Activated CD4-positive, alpha-beta memory T cell treated with anti-CD3 and anti-CD28 coated beads, Interleukin-2, amount 10 ng/mL, durations not matched to agents 7 days and 5 days (primary cell): ENCODE measurements at regions of chr1 and their contacts with region 1.

Region 1: DNA sequence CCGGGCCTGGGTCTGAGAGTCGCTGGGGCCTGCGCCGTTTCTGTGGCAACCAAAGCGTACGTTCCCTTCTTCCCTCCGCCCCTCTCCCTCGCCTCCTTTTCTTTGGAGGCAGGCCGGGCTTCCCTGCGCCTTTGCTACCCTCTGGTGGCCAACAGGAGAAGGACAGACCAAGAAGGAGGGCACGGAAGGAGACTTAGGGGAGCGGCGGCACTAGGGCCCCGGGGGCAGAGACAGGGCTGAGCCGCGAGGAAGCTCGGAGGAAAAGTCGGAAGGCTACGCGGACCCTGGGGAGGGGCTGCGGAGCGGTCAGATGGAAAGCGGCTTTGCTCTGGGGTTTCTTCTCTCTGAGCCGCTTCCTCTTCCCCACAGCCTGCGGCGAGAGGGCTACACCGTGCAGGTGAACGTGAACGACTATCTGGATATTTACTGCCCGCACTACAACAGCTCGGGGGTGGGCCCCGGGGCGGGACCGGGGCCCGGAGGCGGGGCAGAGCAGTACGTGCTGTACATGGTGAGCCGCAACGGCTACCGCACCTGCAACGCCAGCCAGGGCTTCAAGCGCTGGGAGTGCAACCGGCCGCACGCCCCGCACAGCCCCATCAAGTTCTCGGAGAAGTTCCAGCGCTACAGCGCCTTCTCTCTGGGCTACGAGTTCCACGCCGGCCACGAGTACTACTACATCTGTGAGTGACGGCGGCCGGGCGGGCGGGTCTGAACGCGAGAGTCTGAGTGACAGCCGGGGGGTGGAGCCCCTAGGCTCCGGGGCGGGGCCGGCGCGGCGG is 6.3 kb downstream of the EFNA3 start:
- DNase-seq: peak; percentile 93
- H3K4me3 Mint-ChIP-seq: peak overlapping the region; percentile 90
- H3K27ac Mint-ChIP-seq: peak overlapping the region; percentile 82
- H3K4me1 Mint-ChIP-seq: peaks cover 44% of the 10 kb centered on the region
- H3K27me3 Mint-ChIP-seq: peaks cover 35% of the 10 kb centered on the region

Region 2: DNA sequence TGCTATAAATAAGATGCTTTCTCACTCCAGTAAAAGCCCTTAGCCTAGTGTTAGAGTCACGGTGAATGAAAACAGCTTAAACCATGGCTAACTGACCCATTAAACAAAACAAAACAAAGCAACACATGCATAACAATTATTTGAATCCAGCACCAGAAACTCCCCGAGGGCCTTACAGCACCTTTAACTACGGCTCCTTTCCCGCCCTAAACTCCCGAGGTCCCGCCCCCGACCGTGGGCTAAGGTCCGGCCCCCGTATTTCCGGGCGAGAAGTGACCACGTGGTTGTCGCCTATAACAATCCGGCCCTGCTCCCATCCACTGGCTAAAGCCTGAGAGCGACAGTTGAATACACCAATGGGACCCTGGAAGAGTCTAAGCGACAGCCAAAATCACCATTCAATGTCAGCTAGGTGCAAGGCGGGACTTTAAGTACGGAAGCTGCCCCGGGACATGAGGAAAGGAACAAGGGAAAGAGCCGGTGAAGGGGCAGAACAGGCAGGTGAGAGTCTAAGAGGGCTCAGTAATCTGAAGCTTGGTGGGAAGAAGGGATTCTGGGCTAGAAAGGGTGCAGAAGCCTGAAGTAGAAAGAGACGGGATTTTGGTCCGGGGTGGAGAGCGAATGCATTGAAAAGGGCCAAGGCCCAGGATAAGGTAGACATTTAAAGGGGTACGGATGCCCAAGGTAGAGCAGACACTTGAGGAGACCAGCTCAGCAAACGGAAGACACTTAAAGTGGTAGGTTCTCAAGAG is 101.8 kb before region 1 on chr1 and contains the start of gene FLAD1:
- CTCF ChIA-PET with region 1: interaction called, 12 read pairs
- POLR2A ChIA-PET with region 1: no interaction called
- DNase-seq: peak; percentile 97
- H3K4me3 Mint-ChIP-seq: no peak within 1 kb of the TSS
- H3K27ac Mint-ChIP-seq: no peak within 1 kb of the TSS
- H3K4me1 Mint-ChIP-seq: peaks cover 28% of the 10 kb centered on the region
- H3K27me3 Mint-ChIP-seq: no peaks in the 10 kb centered on the region
- total RNA-seq, gene FLAD1: 34.7 to 35.1 TPM

Region 3: DNA sequence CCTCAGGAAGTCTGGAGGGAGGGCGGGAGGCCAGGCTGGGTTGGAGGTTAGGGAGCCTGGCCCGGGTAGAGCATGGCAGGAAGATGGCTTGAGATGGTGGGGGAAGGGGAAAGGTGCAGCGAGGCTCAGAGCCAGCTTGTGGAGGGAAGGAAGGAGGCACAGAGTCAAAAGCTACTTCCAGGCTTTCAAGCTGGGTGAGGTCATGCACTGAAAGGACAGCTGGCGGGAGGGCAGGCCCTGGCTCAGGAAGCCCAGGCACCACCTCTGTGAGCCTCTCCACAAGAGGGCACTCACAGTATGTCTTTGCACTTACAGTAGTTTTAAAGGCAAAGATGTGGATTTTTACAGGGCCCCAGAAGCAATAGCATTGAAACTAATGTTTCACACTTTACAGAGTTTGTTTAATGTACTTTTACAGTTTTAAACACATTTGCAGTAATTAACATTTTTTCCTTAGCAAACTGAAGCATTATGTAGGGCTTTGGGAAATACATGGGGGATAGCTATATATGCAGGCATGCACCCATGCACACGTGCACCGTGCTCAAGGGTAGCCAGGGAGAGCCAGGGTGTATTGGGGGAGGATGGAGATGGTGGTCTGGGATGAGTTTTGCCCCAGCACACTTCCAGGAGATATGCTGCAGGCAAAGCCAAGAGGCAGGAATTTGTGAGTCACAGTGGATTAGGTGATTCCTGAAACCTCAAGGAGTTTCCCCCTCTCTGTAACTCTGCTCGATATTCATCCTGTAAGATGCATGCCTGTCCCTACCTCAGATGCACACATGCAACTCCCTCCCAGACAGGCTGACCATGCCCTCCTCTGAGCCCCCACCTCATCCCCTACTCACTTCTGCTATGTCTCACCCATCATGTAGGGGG is 39.9 kb before region 1 on chr1:
- CTCF ChIA-PET with region 1: interaction called, 59 read pairs
- POLR2A ChIA-PET with region 1: interaction called, 7 read pairs
- DNase-seq: peak; percentile 73
- H3K4me3 Mint-ChIP-seq: no peak overlapping the region
- H3K27ac Mint-ChIP-seq: no peak overlapping the region
- H3K4me1 Mint-ChIP-seq: peaks cover 17% of the 10 kb centered on the region
- H3K27me3 Mint-ChIP-seq: peaks cover 3% of the 10 kb centered on the region

Region 4: DNA sequence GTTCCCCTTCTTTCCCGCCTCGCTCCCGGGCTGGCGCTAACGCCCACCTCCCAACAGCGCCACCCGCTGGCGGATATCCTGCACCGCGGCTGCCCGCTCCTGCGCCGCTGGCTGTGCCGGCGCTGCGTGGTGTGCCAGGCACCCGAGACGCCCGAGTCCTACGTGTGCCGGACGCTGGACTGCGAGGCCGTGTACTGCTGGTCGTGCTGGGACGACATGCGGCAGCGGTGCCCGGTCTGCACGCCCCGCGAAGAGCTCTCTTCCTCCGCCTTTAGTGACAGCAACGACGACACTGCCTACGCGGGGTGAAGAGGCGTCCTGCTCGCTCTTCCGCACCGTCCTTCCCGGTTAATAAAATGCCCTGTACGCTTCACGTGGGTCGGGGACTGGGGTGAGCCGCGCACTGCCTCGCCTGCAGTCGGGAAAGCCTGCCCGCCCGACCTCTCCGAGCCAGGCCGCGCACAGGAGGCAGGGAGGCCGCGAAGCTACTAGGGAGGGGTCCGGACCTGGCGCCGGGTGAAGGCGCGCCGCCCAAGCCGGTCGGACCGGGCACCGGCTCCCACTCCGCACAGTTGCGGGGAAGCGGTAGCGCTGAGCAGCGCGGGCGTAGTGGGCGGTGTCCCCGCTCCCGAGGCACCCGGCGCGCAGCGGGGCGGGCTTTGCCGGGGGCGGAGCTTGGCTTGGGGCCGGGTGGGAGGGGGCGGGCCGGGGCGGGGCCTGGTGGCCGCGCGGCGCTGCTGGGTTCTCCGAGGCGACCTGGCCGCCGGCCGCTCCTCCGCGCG is 34.2 kb before region 1 on chr1 and contains the start of gene ADAM15:
- CTCF ChIA-PET with region 1: interaction called, 61 read pairs
- POLR2A ChIA-PET with region 1: interaction called, 5 read pairs
- DNase-seq: peak; percentile 86
- H3K4me3 Mint-ChIP-seq: peak within 1 kb of the TSS; percentile 84
- H3K27ac Mint-ChIP-seq: peak within 1 kb of the TSS; percentile 80
- H3K4me1 Mint-ChIP-seq: peaks cover 30% of the 10 kb centered on the region
- H3K27me3 Mint-ChIP-seq: no peaks in the 10 kb centered on the region
- total RNA-seq, gene ADAM15: 73.9 to 76.4 TPM

Region 5: DNA sequence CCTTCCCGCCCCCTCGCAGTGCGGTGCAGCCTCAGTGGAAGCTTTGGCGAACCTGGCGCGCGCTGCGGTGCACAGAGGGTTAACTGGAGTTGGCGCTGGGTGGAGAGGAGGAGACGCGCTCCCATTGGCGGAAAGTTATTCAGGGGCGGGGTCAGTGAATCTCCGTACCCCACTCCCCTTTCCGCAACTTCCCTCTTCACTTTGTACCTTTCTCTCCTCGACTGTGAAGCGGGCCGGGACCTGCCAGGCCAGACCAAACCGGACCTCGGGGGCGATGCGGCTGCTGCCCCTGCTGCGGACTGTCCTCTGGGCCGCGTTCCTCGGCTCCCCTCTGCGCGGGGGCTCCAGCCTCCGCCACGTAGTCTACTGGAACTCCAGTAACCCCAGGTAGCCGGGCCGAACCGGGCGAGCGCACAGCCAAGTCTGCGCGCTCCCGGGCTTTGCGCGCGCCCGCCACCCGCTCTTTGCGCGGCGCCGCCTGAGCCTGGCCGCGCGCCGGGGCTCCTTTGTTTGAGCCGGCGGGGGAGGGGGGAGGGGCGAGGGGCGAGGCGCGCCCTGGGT is 21.3 kb before region 1 on chr1 and contains the start of gene EFNA4:
- CTCF ChIA-PET with region 1: interaction called, 121 read pairs
- POLR2A ChIA-PET with region 1: interaction called, 22 read pairs
- DNase-seq: peak; percentile 88
- H3K4me3 Mint-ChIP-seq: peak within 1 kb of the TSS; percentile 90
- H3K27ac Mint-ChIP-seq: peak within 1 kb of the TSS; percentile 37
- H3K4me1 Mint-ChIP-seq: peaks cover 37% of the 10 kb centered on the region
- H3K27me3 Mint-ChIP-seq: no peaks in the 10 kb centered on the region
- total RNA-seq, gene EFNA4: 6.6 to 8.5 TPM

Region 6: DNA sequence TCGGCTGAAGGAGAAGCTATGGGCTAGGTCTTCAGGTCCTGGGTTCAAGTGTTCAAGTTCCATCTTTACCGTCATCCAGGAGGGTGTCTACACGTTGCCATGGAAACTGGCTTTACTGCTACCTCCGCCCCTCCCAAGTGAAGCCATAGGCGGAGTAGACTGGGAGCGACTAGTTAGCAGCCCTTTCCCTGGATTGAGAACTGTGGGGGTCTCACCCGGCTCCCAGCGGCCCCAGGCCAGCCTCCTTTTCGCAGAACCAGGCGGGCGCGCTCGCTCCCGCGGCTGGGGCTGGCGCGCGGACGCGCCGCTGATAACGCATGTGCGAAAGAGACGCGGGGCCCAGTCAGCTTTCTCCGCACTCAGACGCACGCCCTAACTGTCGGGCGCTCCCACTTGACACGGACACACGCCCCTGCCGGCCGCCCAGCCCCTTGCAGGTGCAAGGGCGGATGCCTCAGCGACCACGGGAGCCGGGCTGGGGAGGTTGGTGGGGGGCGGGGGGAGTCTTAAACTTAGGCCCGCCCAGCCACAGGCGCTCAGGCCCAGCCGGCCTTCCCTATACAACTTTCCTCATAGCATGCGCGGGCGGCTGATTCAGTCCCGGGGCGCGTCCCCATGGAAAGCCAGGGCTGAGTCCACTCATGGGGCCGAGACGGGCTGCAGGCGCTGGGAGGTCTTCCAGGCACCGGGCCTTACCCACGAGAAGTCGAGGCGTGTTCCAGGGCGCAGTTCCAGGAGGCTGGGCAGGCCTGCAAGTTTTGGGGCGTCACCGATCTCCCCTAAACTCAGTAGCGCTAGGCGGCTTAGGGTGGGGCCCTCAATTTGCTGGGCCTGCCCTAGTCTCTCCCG is 14.0 kb before region 1 on chr1:
- CTCF ChIA-PET with region 1: interaction called, 121 read pairs
- POLR2A ChIA-PET with region 1: interaction called, 7 read pairs
- DNase-seq: peak; percentile 77
- H3K4me3 Mint-ChIP-seq: no peak overlapping the region
- H3K27ac Mint-ChIP-seq: no peak overlapping the region
- H3K4me1 Mint-ChIP-seq: peaks cover 41% of the 10 kb centered on the region
- H3K27me3 Mint-ChIP-seq: peaks cover 10% of the 10 kb centered on the region

Region 7: DNA sequence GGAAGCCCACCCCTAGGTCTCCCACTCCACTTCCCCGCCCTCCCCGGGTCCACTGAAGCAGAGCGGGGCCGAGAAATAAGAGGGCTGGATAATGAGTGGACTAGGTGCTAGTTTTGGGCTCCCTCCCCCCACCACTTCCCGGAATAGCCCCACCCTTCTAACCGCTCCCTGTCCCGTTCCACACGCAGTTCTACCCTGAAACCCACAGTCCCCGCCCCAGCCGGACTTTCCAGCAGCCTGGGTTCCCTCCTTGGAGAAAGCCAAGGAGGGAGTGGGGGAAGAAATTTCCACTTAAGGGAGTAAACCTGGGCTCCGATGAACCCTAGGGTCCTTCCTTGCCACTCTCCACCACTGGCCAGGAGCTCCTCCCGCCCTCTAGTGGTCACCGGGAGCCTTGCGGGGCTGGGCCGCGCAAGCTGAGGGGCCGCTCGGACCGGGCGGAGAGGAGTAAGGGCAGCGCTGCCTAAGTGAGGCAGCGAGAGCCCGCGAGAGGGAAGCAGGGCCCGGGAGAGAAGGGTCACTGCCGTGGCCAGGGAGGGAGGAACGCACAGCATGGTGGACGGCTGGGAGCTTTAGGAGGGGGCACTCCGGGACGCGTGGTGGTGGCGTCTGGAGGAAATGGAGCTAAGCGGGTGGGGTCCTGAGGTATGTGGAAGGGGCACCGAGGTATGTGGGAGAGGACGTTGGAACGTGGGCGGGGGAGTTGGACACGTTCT is 108.5 kb after region 1 on chr1:
- CTCF ChIA-PET with region 1: interaction called, 12 read pairs
- POLR2A ChIA-PET with region 1: no interaction called
- DNase-seq: peak; percentile 81
- H3K4me3 Mint-ChIP-seq: peak overlapping the region; percentile 76
- H3K27ac Mint-ChIP-seq: peak overlapping the region; percentile 98
- H3K4me1 Mint-ChIP-seq: peaks cover 40% of the 10 kb centered on the region
- H3K27me3 Mint-ChIP-seq: no peaks in the 10 kb centered on the region